Activated CD8-positive, alpha-beta T cell treated with anti-CD3 and anti-CD28 coated beads for 36 hours (primary cell): ENCODE measurements at regions of chr4 and their contacts with region 1.

Region 1: GRCh38 chr4:122716825-122717448 is 15.6 kb upstream of the BBS12 start:
- DNase-seq: peak; percentile 88
- ATAC-seq: peak; percentile 86
- H3K4me3 Mint-ChIP-seq: no peak overlapping the region
- H3K27ac Mint-ChIP-seq: no peak overlapping the region
- H3K4me1 Mint-ChIP-seq: peaks cover 14% of the 10 kb centered on the region
- H3K27me3 Mint-ChIP-seq: peaks cover 4% of the 10 kb centered on the region
- CTCF ChIP-seq: peak; percentile 72

Region 2: GRCh38 chr4:122602277-122603142 is 114.4 kb before region 1 on chr4:
- CTCF ChIA-PET with region 1: interaction called, 46 read pairs
- POLR2A ChIA-PET with region 1: no interaction called
- intact Hi-C with region 1: loop called (anchors 1 kb)
- DNase-seq: no peak
- ATAC-seq: peak; percentile 69
- H3K4me3 Mint-ChIP-seq: no peak overlapping the region
- H3K27ac Mint-ChIP-seq: no peak overlapping the region
- H3K4me1 Mint-ChIP-seq: no peaks in the 10 kb centered on the region
- H3K27me3 Mint-ChIP-seq: peaks cover 15% of the 10 kb centered on the region
- CTCF ChIP-seq: peak; percentile 42

Region 3: DNA sequence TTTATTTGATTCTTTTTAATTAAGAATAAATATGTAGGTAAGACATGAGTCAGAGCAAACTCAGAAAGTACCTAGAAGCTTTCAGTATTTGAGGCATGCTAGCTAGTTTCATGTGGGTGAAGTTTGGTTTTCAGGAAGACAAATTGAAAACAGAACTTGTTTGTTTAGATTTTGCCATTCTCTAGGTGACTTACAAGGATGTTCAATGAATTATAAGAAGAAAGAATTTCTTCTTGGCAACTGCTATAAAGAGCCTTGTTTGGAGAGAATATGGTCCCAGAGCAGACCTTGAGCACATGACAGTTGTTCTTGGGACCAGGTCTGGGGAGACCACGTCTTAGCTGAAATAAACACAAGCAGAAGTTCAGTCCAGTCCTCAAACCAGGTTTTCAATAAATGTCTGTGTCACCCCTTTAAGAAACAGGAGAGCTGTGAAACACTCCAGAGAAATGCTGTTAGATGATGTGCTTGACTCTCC is 58.1 kb before region 1 on chr4:
- CTCF ChIA-PET with region 1: interaction called, 12 read pairs
- POLR2A ChIA-PET with region 1: no interaction called
- intact Hi-C with region 1: no loop called
- DNase-seq: no peak
- ATAC-seq: peak; percentile 90
- H3K4me3 Mint-ChIP-seq: no peak overlapping the region
- H3K27ac Mint-ChIP-seq: peak overlapping the region; percentile 82
- H3K4me1 Mint-ChIP-seq: peaks cover 33% of the 10 kb centered on the region
- H3K27me3 Mint-ChIP-seq: peaks cover 4% of the 10 kb centered on the region
- CTCF ChIP-seq: no peak

Region 4: GRCh38 chr4:122666527-122667245 is 50.3 kb before region 1 on chr4:
- CTCF ChIA-PET with region 1: interaction called, 11 read pairs
- POLR2A ChIA-PET with region 1: no interaction called
- intact Hi-C with region 1: loop called (anchors 5 kb)
- DNase-seq: peak; percentile 32
- ATAC-seq: peak; percentile 75
- H3K4me3 Mint-ChIP-seq: no peak overlapping the region
- H3K27ac Mint-ChIP-seq: peak overlapping the region; percentile 74
- H3K4me1 Mint-ChIP-seq: peaks cover 57% of the 10 kb centered on the region
- H3K27me3 Mint-ChIP-seq: peaks cover 7% of the 10 kb centered on the region
- CTCF ChIP-seq: no peak

Region 5: GRCh38 chr4:122732329-122733026 is 15.5 kb after region 1 on chr4 and contains the start of gene BBS12:
- CTCF ChIA-PET with region 1: interaction called, 34 read pairs
- POLR2A ChIA-PET with region 1: interaction called, 3 read pairs
- intact Hi-C with region 1: no loop called
- DNase-seq: peak; percentile 99
- ATAC-seq: peak; percentile 99
- H3K4me3 Mint-ChIP-seq: peak within 1 kb of the TSS; percentile 94
- H3K27ac Mint-ChIP-seq: peak within 1 kb of the TSS; percentile 91
- H3K4me1 Mint-ChIP-seq: peaks cover 11% of the 10 kb centered on the region
- H3K27me3 Mint-ChIP-seq: no peaks in the 10 kb centered on the region
- CTCF ChIP-seq: no peak
- total RNA-seq, gene BBS12: 0.74 to 0.89 TPM

Region 6: GRCh38 chr4:122906859-122907305 is 189.9 kb after region 1 on chr4:
- CTCF ChIA-PET with region 1: no interaction called
- POLR2A ChIA-PET with region 1: no interaction called
- intact Hi-C with region 1: no loop called
- DNase-seq: peak; percentile 8
- ATAC-seq: no peak
- H3K4me3 Mint-ChIP-seq: no peak overlapping the region
- H3K27ac Mint-ChIP-seq: no peak overlapping the region
- H3K4me1 Mint-ChIP-seq: no peaks in the 10 kb centered on the region
- H3K27me3 Mint-ChIP-seq: no peaks in the 10 kb centered on the region
- CTCF ChIP-seq: no peak

Region 7: GRCh38 chr4:122930862-122931261 is 213.9 kb after region 1 on chr4:
- CTCF ChIA-PET with region 1: interaction called, 10 read pairs
- POLR2A ChIA-PET with region 1: no interaction called
- intact Hi-C with region 1: no loop called
- DNase-seq: no peak
- ATAC-seq: no peak
- H3K4me3 Mint-ChIP-seq: no peak overlapping the region
- H3K27ac Mint-ChIP-seq: no peak overlapping the region
- H3K4me1 Mint-ChIP-seq: peaks cover 6% of the 10 kb centered on the region
- H3K27me3 Mint-ChIP-seq: no peaks in the 10 kb centered on the region
- CTCF ChIP-seq: peak; percentile 70